ENCODE measurements at regions of chr19 and their contacts with region 1.

Region 1: GRCh38 chr19:48398375-48399235 is 5.1 kb downstream of the GRIN2D start:
- DNase-seq: peak; percentile 93 to 95
- H3K4me3 ChIP-seq: peak overlapping the region; percentile 51
- H3K4me3 Mint-ChIP-seq: peak overlapping the region; percentile 83
- H3K27ac Mint-ChIP-seq: peak overlapping the region; percentile 67
- H3K4me1 ChIP-seq: peaks cover 35% of the 10 kb centered on the region
- H3K4me1 Mint-ChIP-seq: peaks cover 50% of the 10 kb centered on the region
- H3K27me3 ChIP-seq: no peaks in the 10 kb centered on the region
- H3K27me3 Mint-ChIP-seq: no peaks in the 10 kb centered on the region
- CTCF ChIP-seq: no peak

Region 2: GRCh38 chr19:48419158-48419920 is 20.7 kb after region 1 on chr19:
- CTCF ChIA-PET with region 1: no interaction called
- POLR2A ChIA-PET with region 1: no interaction called
- intact Hi-C with region 1: loop called (anchors 2 kb)
- DNase-seq: peak; percentile 63 to 72
- H3K4me3 ChIP-seq: no peak overlapping the region
- H3K4me3 Mint-ChIP-seq: no peak overlapping the region
- H3K27ac Mint-ChIP-seq: no peak overlapping the region
- H3K4me1 ChIP-seq: peaks cover under 1% of the 10 kb centered on the region; the same call in 1 of the 2 replicates
- H3K4me1 Mint-ChIP-seq: peaks cover 5% of the 10 kb centered on the region
- H3K27me3 ChIP-seq: no peaks in the 10 kb centered on the region; the same call in 1 of the 2 replicates
- H3K27me3 Mint-ChIP-seq: no peaks in the 10 kb centered on the region
- CTCF ChIP-seq: no peak